ENCODE measurements at regions of chr11 and their contacts with region 1.

Region 1: GRCh38 chr11:587978-588380 is 11.7 kb downstream of the PHRF1 start:
- DNase-seq: peak; percentile 35 to 88 (median 80)
- ATAC-seq: peak; percentile 95 to 98
- H3K4me3 Mint-ChIP-seq: peak overlapping the region; percentile 70 to 95 (median 86)
- H3K27ac Mint-ChIP-seq: peak overlapping the region; percentile 97 to 100 (median 100)
- H3K4me1 Mint-ChIP-seq: peaks cover 17 to 41% (median 27%) of the 10 kb centered on the region in 4 donors
- H3K27me3 Mint-ChIP-seq: no peaks in the 10 kb centered on the region

Region 2: GRCh38 chr11:488999-489398 is 99.0 kb before region 1 on chr11:
- POLR2A ChIA-PET with region 1: no interaction called
- DNase-seq: no peak
- ATAC-seq: no peak
- H3K4me3 Mint-ChIP-seq: no peak overlapping the region
- H3K27ac Mint-ChIP-seq: peak overlapping the region in 1 of 10 donors; percentile 57
- H3K4me1 Mint-ChIP-seq: no peaks in the 10 kb centered on the region
- H3K27me3 Mint-ChIP-seq: no peaks in the 10 kb centered on the region

Region 3: DNA sequence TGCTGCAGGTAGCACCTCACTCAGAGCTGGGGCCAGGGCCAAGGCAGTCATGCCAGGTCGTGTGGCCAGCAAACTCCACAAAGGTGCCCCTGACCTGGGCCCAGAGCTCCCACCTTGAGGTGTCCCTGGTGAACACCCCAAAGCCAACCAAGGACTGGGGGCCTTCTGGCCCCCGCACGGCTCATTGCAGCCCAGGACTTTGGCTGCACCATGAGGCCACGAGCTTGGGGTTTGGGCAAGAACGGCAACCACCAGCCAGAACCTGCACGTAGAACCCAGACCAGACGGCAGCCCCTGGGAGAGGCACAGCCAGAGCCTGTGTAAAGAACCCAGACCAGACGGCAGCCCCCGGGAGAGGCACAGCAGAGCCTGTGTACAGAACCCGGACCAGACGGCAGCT is 42.8 kb before region 1 on chr11:
- POLR2A ChIA-PET with region 1: no interaction called
- DNase-seq: no peak
- ATAC-seq: no peak
- H3K4me3 Mint-ChIP-seq: no peak overlapping the region
- H3K27ac Mint-ChIP-seq: no peak overlapping the region
- H3K4me1 Mint-ChIP-seq: no peaks in the 10 kb centered on the region
- H3K27me3 Mint-ChIP-seq: peaks cover 0 to 1% (median 0%) of the 10 kb centered on the region in 5 donors

Region 4: GRCh38 chr11:568306-569157 is 19.4 kb before region 1 on chr11:
- POLR2A ChIA-PET with region 1: interaction called, 12 read pairs
- DNase-seq: peak; percentile 88 to 95 (median 93)
- ATAC-seq: peak; percentile 92 to 93
- H3K4me3 Mint-ChIP-seq: peak overlapping the region; percentile 61 to 88 (median 80)
- H3K27ac Mint-ChIP-seq: peak overlapping the region in 6 of 10 donors; percentile 15 to 83 (median 70)
- H3K4me1 Mint-ChIP-seq: peaks cover 0 to 10% (median 3%) of the 10 kb centered on the region in 4 donors
- H3K27me3 Mint-ChIP-seq: no peaks in the 10 kb centered on the region